Panc1 (cell line): ENCODE measurements at regions of chr22 and their contacts with region 1.

Region 1: GRCh38 chr22:18070556-18071306 is 7.1 kb upstream of the PEX26 start:
- DNase-seq: no peak
- ATAC-seq: no peak
- H3K4me3 ChIP-seq: no peak overlapping the region
- H3K27ac ChIP-seq: no peak overlapping the region
- H3K4me1 ChIP-seq: no peaks in the 10 kb centered on the region
- H3K27me3 ChIP-seq: no peaks in the 10 kb centered on the region
- CTCF ChIP-seq: peak; percentile 47; the same call in 1 of the 2 replicates

Region 2: DNA sequence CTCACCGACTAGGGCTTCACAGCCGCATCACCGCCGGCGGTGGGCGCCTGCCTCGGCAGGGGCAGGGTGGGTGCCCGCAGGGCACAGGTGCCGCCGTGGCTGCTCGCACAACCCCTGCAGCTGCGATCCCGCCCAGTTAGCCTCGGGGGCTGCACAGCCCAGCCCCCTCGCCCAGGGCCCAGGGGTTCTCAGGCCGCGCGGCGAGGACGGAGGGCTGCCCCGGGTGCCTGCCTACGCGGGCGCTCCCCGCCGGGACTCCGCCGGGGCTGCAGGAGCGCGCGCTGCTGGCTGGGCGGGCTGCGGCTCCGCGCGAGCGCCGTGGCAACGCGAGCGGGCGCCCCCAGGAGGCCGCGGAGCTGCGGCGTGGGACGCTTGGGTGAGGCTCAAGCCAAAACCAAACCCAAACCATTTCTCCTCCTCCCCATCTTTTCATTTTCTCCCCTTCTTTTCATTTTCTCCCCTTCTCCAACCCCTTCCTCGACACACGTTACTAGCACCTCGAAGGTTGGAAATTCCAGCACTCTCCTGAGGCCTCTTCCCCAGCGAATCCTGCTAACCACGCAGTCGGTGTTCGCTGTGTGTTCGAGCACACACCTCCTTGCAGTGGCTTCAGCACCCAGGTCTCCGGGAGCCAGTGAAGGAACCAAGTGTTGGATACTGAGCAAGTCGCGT is 46.3 kb before region 1 on chr22 and contains the start of gene MICAL3:
- CTCF ChIA-PET with region 1: no interaction called
- POLR2A ChIA-PET with region 1: no interaction called
- in situ Hi-C with region 1: no loop called
- intact Hi-C with region 1: no loop called
- DNase-seq: no peak
- ATAC-seq: peak; percentile 93
- H3K4me3 ChIP-seq: peak within 1 kb of the TSS; percentile 65 to 81
- H3K27ac ChIP-seq: peak within 1 kb of the TSS; percentile 34; the same call in 1 of the 2 replicates
- H3K4me1 ChIP-seq: peaks cover 3% of the 10 kb centered on the region
- H3K27me3 ChIP-seq: no peaks in the 10 kb centered on the region
- CTCF ChIP-seq: peak; percentile 88
- total RNA-seq, gene MICAL3: 47.1 TPM

Region 3: DNA sequence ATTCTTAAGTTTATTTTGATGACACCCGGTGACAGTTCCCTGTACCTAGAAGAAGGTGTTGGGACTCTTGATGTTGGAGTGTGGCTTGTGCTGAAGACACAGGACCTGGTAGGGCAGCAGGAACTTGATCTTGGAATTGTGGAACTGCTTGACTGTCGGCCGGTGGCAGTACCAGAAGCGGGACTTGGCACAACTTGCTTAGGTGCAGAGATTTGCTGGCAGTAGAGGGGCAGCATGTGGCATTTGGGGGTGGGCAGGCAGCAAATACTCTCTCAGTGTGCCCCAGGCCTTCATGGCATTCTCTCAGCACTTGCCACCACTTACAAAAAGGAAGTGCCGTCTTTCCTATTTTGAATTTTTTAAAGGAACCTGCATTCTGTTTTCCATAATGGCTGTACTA is 10.7 kb after region 1 on chr22:
- CTCF ChIA-PET with region 1: interaction called, 4 read pairs
- POLR2A ChIA-PET with region 1: interaction called, 11 read pairs
- in situ Hi-C with region 1: no loop called
- intact Hi-C with region 1: no loop called
- DNase-seq: no peak
- ATAC-seq: no peak
- H3K4me3 ChIP-seq: no peak overlapping the region
- H3K27ac ChIP-seq: no peak overlapping the region
- H3K4me1 ChIP-seq: peaks cover 7% of the 10 kb centered on the region
- H3K27me3 ChIP-seq: no peaks in the 10 kb centered on the region
- CTCF ChIP-seq: no peak

Region 4: GRCh38 chr22:18110194-18110953 is 39.6 kb after region 1 on chr22 and contains the start of gene TUBA8:
- CTCF ChIA-PET with region 1: no interaction called
- POLR2A ChIA-PET with region 1: no interaction called
- in situ Hi-C with region 1: no loop called
- intact Hi-C with region 1: no loop called
- DNase-seq: no peak
- ATAC-seq: peak; percentile 89
- H3K4me3 ChIP-seq: peak within 1 kb of the TSS; percentile 40 to 49
- H3K27ac ChIP-seq: no peak within 1 kb of the TSS
- H3K4me1 ChIP-seq: peaks cover 5% of the 10 kb centered on the region
- H3K27me3 ChIP-seq: no peaks in the 10 kb centered on the region
- CTCF ChIP-seq: no peak
- total RNA-seq, gene TUBA8: 1.3 TPM